A549 (cell line): ENCODE measurements at regions of chr15 and their contacts with region 1.

Region 1: DNA sequence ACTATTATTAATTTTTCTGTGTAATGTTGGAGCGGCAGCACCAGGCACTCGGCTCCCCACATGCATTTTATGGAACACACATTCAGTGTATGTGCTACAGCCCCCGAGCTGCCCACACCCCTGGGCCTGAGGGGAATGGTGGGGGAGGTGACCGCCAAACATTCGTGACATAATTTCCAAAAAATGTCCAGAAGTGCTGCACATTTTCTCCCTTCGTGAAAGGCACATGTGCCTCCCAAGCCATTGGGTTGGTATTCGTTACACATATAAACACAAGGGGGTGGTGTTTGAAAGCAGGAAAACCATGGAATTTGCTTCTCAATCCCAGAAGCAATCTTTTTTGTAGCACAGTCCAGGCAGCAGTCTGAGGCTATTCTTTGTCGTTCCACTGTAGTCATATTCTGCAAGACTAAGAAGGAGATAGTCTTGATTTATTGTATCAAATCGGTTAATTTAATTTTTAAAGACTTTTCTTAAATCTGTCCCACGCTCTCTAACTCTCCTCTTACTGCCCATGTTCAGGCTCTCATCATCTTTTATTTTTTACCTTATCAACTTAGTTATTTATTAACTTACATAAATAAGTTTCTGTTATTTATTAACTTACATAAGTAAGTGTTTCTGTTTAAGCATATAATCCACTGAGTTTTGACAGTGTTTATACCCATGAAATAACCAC is 39.2 kb upstream of the POLR2M start:
- DNase-seq: peak; percentile 65 to 75
- ATAC-seq: peak; percentile 82 to 92
- H3K4me3 ChIP-seq: no peak overlapping the region
- H3K27ac ChIP-seq: no peak overlapping the region
- H3K4me1 ChIP-seq: peaks cover 18% of the 10 kb centered on the region
- CTCF ChIP-seq: peak; percentile 68
- EP300 ChIP-seq: no peak
- POLR2A ChIP-seq: no peak
- RAD21 ChIP-seq: peak; percentile 78 to 80

Region 2: GRCh38 chr15:57640935-57641682 is 26.2 kb before region 1 on chr15:
- CTCF ChIA-PET with region 1: interaction called, 11 read pairs
- POLR2A ChIA-PET with region 1: no interaction called
- DNase-seq: peak; percentile 40 to 63
- ATAC-seq: peak; percentile 87 to 92
- H3K4me3 ChIP-seq: no peak overlapping the region
- H3K27ac ChIP-seq: no peak overlapping the region
- H3K4me1 ChIP-seq: no peaks in the 10 kb centered on the region
- CTCF ChIP-seq: peak; percentile 38; the same call in 2 of the 3 replicates
- EP300 ChIP-seq: no peak
- POLR2A ChIP-seq: no peak
- RAD21 ChIP-seq: peak; percentile 43 to 50; a peak in 3 of 5 replicates

Region 3: DNA sequence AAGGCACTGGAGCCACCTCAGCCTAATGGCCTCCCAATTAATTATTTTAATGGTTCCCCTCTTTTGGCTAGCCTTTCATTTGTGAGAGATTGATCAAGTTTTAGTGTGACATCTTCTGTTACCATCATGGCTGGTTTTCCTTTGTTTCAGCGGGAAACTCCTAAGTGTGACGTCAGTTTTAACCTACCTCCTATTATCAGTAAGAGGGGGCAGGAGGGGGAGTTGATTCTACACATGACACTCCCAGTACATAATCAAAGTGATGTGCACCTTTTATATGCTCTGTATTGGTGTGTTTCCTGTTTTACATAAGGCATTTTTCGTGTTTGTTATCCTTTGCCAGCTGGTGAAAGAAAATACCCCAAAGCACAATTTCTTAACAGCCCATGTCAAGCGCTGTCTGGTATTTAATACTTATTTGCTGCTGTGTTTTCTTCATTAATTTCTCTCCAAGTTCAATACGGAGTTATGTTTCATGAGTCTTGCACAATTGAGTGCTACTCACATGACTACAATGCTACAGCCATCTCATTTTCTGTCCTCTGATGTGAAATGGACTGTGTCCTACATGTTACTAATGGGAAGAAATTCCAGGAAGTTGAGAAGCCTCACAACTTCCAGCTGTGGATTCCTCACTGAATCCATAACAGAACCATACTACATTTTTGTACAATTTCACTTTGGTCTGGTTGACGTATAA is 13.0 kb before region 1 on chr15:
- CTCF ChIA-PET with region 1: interaction called, 26 read pairs
- POLR2A ChIA-PET with region 1: no interaction called
- DNase-seq: no peak
- ATAC-seq: no peak
- H3K4me3 ChIP-seq: no peak overlapping the region
- H3K27ac ChIP-seq: no peak overlapping the region
- H3K4me1 ChIP-seq: no peaks in the 10 kb centered on the region
- CTCF ChIP-seq: no peak
- EP300 ChIP-seq: no peak
- POLR2A ChIP-seq: no peak
- RAD21 ChIP-seq: no peak

Region 4: GRCh38 chr15:57680021-57680420 is 12.7 kb after region 1 on chr15:
- CTCF ChIA-PET with region 1: interaction called, 52 read pairs
- POLR2A ChIA-PET with region 1: no interaction called
- DNase-seq: peak in 1 of 2 experiments; percentile 25
- ATAC-seq: peak; percentile 84 to 85
- H3K4me3 ChIP-seq: no peak overlapping the region
- H3K27ac ChIP-seq: peak overlapping the region in 1 of 2 experiments; percentile 14; a peak in 2 of 6 replicates
- H3K4me1 ChIP-seq: 0 out of 3 replicates have a peak, but pooled peaks cover 4% of the 10 kb centered on the region
- CTCF ChIP-seq: no peak
- EP300 ChIP-seq: no peak
- POLR2A ChIP-seq: no peak
- RAD21 ChIP-seq: no peak

Region 5: DNA sequence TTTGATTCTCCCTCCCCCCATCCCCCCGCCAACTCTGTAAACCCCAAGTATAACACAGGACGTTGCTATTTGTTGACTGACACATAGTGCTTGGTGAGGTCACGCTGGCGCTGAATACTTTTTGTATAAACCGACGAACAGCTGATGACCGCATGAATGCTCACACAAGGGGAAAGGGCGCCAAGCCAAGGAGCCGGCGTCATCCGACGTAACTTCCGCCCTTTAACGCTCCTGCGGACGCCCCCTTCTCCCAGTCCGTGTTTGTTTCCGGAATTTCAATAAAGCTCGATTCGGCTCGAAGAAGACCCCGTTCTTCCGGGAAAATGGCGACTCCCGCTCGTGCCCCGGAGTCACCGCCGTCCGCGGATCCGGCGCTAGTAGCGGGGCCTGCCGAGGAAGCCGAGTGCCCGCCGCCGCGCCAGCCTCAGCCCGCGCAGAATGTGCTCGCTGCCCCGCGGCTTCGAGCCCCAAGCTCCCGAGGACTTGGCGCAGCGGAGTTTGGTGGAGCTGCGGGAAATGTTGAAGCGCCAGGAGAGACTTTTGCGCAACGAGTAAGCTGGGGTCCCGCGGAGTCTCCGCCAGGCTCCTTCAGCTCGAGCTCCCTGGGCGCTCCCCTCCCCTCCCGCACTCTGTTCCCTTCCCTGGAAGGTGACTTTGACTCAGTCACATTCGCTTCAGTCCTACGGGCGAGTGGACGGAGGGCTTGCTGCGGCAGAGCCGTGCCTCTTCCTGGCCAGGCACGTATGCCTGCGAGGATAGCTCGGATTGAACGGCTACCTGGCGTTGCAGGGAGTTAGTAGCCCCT is 39.3 kb after region 1 on chr15 and contains the start of gene POLR2M:
- CTCF ChIA-PET with region 1: interaction called, 11 read pairs
- POLR2A ChIA-PET with region 1: interaction called, 3 read pairs
- DNase-seq: peak; percentile 92 to 97
- ATAC-seq: peak; percentile 94 to 96
- H3K4me3 ChIP-seq: peak within 1 kb of the TSS; percentile 80
- H3K27ac ChIP-seq: peak within 1 kb of the TSS; percentile 98
- H3K4me1 ChIP-seq: peaks cover 11% of the 10 kb centered on the region; the same call in 2 of the 3 replicates
- CTCF ChIP-seq: no peak
- EP300 ChIP-seq: no peak
- POLR2A ChIP-seq: peak; percentile 70
- RAD21 ChIP-seq: 0 out of 5 replicates have a peak, but pooled peaks of 1 of the 2 experiments have one; percentile 2
- polyA plus RNA-seq, gene POLR2M: 99.6 and 107 TPM in 2 replicates

Region 6: DNA sequence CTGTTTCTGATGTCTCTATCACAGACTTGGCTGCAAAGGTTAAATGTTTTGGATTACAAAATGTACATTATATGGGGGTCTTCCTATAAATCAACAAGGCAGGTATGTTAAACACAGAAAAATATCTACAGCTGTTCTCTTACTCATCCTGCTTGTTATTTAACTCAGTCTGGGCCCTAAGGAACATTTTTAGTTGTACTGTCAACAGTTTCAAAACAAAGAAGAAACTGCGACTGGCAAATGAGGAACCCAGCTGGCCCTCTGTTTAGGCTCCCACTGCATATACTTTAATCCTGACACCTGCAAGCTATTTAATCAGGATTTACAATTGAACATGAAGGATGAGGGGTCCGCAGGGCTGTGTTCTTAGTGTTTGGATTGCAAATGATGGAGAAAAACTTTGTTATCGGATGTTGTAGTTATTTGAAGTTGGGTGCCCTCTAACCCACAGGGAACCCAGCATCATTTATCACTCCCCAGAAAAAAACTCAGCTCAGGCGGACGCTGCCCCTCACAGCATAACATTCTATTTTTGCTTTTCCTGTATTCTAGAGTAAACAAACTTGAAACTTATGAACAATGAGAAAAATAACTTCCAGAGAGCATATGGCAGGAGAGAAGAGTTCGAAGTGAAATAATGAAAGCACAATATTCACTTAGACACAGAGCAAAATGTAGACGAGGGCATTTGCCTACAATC is 130.4 kb after region 1 on chr15:
- CTCF ChIA-PET with region 1: no interaction called
- POLR2A ChIA-PET with region 1: no interaction called
- DNase-seq: no peak
- ATAC-seq: no peak
- H3K4me3 ChIP-seq: no peak overlapping the region
- H3K27ac ChIP-seq: no peak overlapping the region
- H3K4me1 ChIP-seq: no peaks in the 10 kb centered on the region
- CTCF ChIP-seq: no peak
- EP300 ChIP-seq: no peak
- POLR2A ChIP-seq: no peak
- RAD21 ChIP-seq: no peak